Activated CD8-positive, alpha-beta T cell treated with anti-CD3 and anti-CD28 coated beads for 36 hours (primary cell): ENCODE measurements at regions of chr1 and their contacts with region 1.

Region 1: GRCh38 chr1:67500413-67500959 is 70.3 kb upstream of the SERBP1 start:
- DNase-seq: peak; percentile 95
- ATAC-seq: peak; percentile 100
- H3K4me3 Mint-ChIP-seq: no peak overlapping the region
- H3K27ac Mint-ChIP-seq: peak overlapping the region; percentile 21
- H3K4me1 Mint-ChIP-seq: peaks cover 7% of the 10 kb centered on the region
- H3K27me3 Mint-ChIP-seq: peaks cover 7% of the 10 kb centered on the region
- CTCF ChIP-seq: peak; percentile 92

Region 2: GRCh38 chr1:67230539-67230938 is 269.9 kb before region 1 on chr1:
- CTCF ChIA-PET with region 1: interaction called, 17 read pairs
- POLR2A ChIA-PET with region 1: interaction called, 3 read pairs
- intact Hi-C with region 1: loop called (anchors 2 kb)
- DNase-seq: no peak
- ATAC-seq: no peak
- H3K4me3 Mint-ChIP-seq: no peak overlapping the region
- H3K27ac Mint-ChIP-seq: no peak overlapping the region
- H3K4me1 Mint-ChIP-seq: peaks cover 9% of the 10 kb centered on the region
- H3K27me3 Mint-ChIP-seq: peaks cover 5% of the 10 kb centered on the region
- CTCF ChIP-seq: no peak

Region 3: DNA sequence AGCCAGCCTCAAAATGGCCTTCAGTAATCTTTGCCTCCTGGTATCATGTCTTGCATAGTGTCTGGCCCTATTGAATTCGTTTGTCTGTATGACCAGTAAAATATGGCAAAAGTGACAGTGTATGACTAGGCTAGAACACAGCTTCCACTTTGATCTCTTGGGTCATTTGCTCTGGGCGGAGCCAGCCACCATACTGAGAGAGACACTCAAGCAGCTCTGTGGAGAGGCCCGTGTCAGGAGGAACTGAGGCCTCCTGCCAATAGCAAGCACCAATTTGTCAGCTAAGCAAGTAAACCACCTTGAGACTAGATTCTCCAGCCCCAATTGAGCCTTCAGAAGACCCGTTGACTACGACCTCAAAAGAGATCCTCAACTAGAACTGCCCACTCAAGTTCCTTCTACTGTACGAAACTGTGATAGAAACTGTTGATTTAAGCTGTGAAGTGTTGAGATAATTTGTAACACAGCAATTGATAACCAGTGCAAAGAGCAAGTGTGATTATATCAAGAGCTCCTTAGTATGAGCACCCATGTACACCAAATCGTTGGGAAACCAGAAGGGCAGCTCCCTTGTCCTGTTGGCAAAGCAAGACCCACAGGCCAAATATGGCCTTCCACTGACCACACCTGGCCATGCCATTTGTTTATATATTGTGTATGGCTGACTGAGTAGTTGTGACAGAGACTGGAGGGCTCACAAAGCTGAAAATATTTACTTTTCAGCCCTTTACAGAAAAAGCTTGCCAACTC is 17.6 kb before region 1 on chr1:
- CTCF ChIA-PET with region 1: interaction called, 12 read pairs
- POLR2A ChIA-PET with region 1: interaction called, 3 read pairs
- intact Hi-C with region 1: no loop called
- DNase-seq: no peak
- ATAC-seq: no peak
- H3K4me3 Mint-ChIP-seq: no peak overlapping the region
- H3K27ac Mint-ChIP-seq: no peak overlapping the region
- H3K4me1 Mint-ChIP-seq: peaks cover 6% of the 10 kb centered on the region
- H3K27me3 Mint-ChIP-seq: no peaks in the 10 kb centered on the region
- CTCF ChIP-seq: no peak

Region 4: GRCh38 chr1:67489643-67490042 is 10.8 kb before region 1 on chr1:
- CTCF ChIA-PET with region 1: interaction called, 26 read pairs
- POLR2A ChIA-PET with region 1: no interaction called
- intact Hi-C with region 1: no loop called
- DNase-seq: peak; percentile 37
- ATAC-seq: peak; percentile 66
- H3K4me3 Mint-ChIP-seq: no peak overlapping the region
- H3K27ac Mint-ChIP-seq: no peak overlapping the region
- H3K4me1 Mint-ChIP-seq: peaks cover under 1% of the 10 kb centered on the region
- H3K27me3 Mint-ChIP-seq: no peaks in the 10 kb centered on the region
- CTCF ChIP-seq: no peak

Region 5: GRCh38 chr1:67515324-67516080 is 15.0 kb after region 1 on chr1:
- CTCF ChIA-PET with region 1: interaction called, 14 read pairs
- POLR2A ChIA-PET with region 1: no interaction called
- intact Hi-C with region 1: no loop called
- DNase-seq: no peak
- ATAC-seq: no peak
- H3K4me3 Mint-ChIP-seq: no peak overlapping the region
- H3K27ac Mint-ChIP-seq: no peak overlapping the region
- H3K4me1 Mint-ChIP-seq: no peaks in the 10 kb centered on the region
- H3K27me3 Mint-ChIP-seq: no peaks in the 10 kb centered on the region
- CTCF ChIP-seq: no peak